Caco-2 (cell line): ENCODE measurements at regions of chr3 and their contacts with region 1.

Region 1: GRCh38 chr3:178436773-178437172 is 99.5 kb upstream of the KCNMB2 start:
- DNase-seq: no peak
- H3K4me3 ChIP-seq: no peak overlapping the region
- H3K4me3 Mint-ChIP-seq: no peak overlapping the region
- H3K27ac Mint-ChIP-seq: no peak overlapping the region
- H3K4me1 ChIP-seq: no peaks in the 10 kb centered on the region
- H3K4me1 Mint-ChIP-seq: no peaks in the 10 kb centered on the region
- H3K27me3 ChIP-seq: no peaks in the 10 kb centered on the region
- H3K27me3 Mint-ChIP-seq: no peaks in the 10 kb centered on the region
- CTCF ChIP-seq: peak; percentile 45 to 51

Region 2: DNA sequence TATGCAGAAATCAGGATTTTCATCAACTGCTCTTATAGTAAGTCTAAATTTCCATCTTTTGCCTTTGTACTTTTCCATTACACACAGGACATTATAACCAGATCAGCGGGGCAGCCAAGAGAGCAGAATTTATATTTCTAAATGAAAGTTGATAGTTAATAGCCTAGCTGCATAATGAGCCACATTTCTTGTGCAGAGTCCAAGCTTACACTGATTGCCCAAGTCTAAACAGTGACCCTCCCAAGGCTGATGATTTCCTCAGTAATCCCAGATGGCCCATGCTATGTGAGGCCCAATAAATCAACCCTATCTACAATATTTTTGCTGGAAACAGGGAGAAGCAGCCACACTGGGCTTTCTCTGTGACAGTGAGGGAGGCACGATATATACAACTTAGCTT is 376.4 kb before region 1 on chr3:
- CTCF ChIA-PET with region 1: no interaction called
- POLR2A ChIA-PET with region 1: no interaction called
- intact Hi-C with region 1: no loop called
- DNase-seq: no peak
- H3K4me3 ChIP-seq: no peak overlapping the region
- H3K4me3 Mint-ChIP-seq: no peak overlapping the region
- H3K27ac Mint-ChIP-seq: no peak overlapping the region
- H3K4me1 ChIP-seq: 0 out of 2 replicates have a peak, but pooled peaks cover 3% of the 10 kb centered on the region
- H3K4me1 Mint-ChIP-seq: no peaks in the 10 kb centered on the region
- H3K27me3 ChIP-seq: no peaks in the 10 kb centered on the region
- H3K27me3 Mint-ChIP-seq: no peaks in the 10 kb centered on the region
- CTCF ChIP-seq: no peak

Region 3: DNA sequence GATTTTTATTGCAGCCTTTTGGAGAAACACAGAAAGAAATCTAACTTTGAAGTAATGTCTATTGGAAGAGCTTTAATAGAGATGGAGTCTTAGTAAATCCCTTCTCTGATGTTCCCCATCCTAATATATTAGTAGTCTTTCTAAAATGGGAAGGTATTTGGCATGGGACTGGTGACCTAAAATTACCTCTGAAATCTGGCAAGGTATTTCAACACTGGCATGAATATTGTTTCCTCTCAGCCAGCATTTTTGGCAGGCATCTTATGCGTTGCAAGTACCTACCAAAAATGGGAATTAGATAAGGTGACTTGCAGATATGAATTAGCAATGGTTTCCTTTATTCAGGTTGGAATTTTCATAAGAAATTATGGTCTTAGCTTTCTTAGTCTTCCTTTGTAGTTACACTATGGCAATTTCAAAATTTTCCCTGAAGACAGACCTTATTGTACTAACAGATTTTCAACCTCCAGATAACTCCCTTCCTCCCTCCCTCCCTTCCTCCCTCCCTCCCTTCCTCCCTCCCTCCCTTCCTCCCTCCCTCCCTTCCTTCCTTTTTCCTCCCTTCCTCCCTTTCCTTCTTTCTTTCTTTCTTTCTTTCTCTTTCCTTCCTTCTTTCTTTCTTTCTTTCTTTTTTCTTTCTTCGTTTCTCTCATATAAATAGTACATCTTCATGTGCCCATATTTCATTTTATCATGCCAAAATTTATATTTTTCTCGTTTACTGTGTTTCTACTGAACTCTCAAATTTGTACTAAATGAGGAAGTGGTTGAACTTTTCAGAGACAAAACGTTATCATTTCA is 68.8 kb before region 1 on chr3:
- CTCF ChIA-PET with region 1: no interaction called
- POLR2A ChIA-PET with region 1: no interaction called
- intact Hi-C with region 1: no loop called
- DNase-seq: no peak
- H3K4me3 ChIP-seq: no peak overlapping the region
- H3K4me3 Mint-ChIP-seq: no peak overlapping the region
- H3K27ac Mint-ChIP-seq: no peak overlapping the region
- H3K4me1 ChIP-seq: no peaks in the 10 kb centered on the region
- H3K4me1 Mint-ChIP-seq: no peaks in the 10 kb centered on the region
- H3K27me3 ChIP-seq: no peaks in the 10 kb centered on the region
- H3K27me3 Mint-ChIP-seq: no peaks in the 10 kb centered on the region
- CTCF ChIP-seq: no peak

Region 4: DNA sequence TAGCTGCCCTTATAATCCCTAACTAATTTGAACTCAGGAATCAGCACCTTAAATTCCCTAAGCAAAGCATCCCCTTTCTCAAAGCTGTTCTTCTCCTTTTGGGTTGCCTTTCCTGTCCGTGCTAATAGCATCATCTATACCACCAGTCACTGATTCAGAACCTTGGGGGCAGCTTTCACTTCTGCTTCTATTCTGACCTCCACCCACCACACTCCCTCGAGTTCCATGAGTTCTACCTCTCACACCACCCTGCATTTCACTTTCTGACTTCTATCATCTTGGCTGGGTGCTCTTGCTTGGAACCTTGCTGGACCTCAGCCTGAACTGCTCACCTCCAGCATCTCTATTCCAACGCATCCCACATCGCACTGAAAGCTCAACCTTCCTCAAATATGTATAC is 44.0 kb after region 1 on chr3:
- CTCF ChIA-PET with region 1: no interaction called
- POLR2A ChIA-PET with region 1: no interaction called
- intact Hi-C with region 1: no loop called
- DNase-seq: no peak
- H3K4me3 ChIP-seq: no peak overlapping the region
- H3K4me3 Mint-ChIP-seq: no peak overlapping the region
- H3K27ac Mint-ChIP-seq: no peak overlapping the region
- H3K4me1 ChIP-seq: peaks cover 8% of the 10 kb centered on the region; the same call in 1 of the 2 replicates
- H3K4me1 Mint-ChIP-seq: no peaks in the 10 kb centered on the region
- H3K27me3 ChIP-seq: no peaks in the 10 kb centered on the region
- H3K27me3 Mint-ChIP-seq: no peaks in the 10 kb centered on the region
- CTCF ChIP-seq: no peak

Region 5: DNA sequence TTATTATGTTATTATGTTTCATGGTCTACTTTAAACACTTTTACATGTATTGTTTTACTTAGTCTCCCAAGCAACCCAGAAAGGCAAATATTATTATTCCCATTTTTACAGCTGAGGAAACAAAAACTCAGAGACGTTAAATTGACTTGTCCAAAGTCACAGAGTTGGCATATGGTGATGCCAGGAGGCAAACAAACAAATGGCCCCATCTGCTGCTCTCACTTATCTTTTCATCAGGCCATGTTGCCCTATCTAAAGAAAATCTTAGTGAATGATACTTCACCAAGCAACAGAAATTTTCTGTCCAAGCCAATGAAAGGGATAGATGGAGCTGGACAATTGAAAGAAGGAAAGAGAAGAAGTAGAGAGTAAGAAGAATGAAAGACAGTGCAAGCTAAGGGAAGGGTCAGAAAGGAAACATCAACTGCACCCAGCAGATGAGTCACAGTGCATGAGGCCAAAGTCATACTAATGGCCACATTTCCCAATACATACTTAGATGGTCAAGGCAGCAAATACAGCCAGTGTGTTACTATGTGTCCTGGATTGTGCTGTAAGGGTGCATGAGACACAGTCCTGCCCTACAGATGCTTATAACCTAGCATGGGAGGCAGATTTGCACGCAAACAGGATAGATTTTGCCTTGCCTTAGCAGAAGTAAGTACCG is 366.4 kb after region 1 on chr3:
- CTCF ChIA-PET with region 1: no interaction called
- POLR2A ChIA-PET with region 1: no interaction called
- intact Hi-C with region 1: loop called (anchors 5 kb)
- DNase-seq: no peak
- H3K4me3 ChIP-seq: no peak overlapping the region
- H3K4me3 Mint-ChIP-seq: no peak overlapping the region
- H3K27ac Mint-ChIP-seq: no peak overlapping the region
- H3K4me1 ChIP-seq: peaks cover 25% of the 10 kb centered on the region
- H3K4me1 Mint-ChIP-seq: peaks cover 22% of the 10 kb centered on the region
- H3K27me3 ChIP-seq: no peaks in the 10 kb centered on the region
- H3K27me3 Mint-ChIP-seq: no peaks in the 10 kb centered on the region
- CTCF ChIP-seq: no peak

Region 6: GRCh38 chr3:178947738-178948137 is 511.0 kb after region 1 on chr3:
- CTCF ChIA-PET with region 1: no interaction called
- POLR2A ChIA-PET with region 1: no interaction called
- intact Hi-C with region 1: loop called (anchors 1 kb)
- DNase-seq: no peak
- H3K4me3 ChIP-seq: no peak overlapping the region
- H3K4me3 Mint-ChIP-seq: no peak overlapping the region
- H3K27ac Mint-ChIP-seq: no peak overlapping the region
- H3K4me1 ChIP-seq: no peaks in the 10 kb centered on the region
- H3K4me1 Mint-ChIP-seq: no peaks in the 10 kb centered on the region
- H3K27me3 ChIP-seq: no peaks in the 10 kb centered on the region
- H3K27me3 Mint-ChIP-seq: no peaks in the 10 kb centered on the region
- CTCF ChIP-seq: no peak

Region 7: GRCh38 chr3:178966299-178967176 is 529.8 kb after region 1 on chr3:
- CTCF ChIA-PET with region 1: interaction called, 11 read pairs
- POLR2A ChIA-PET with region 1: no interaction called
- intact Hi-C with region 1: loop called (anchors 1 kb)
- DNase-seq: no peak
- H3K4me3 ChIP-seq: no peak overlapping the region
- H3K4me3 Mint-ChIP-seq: no peak overlapping the region
- H3K27ac Mint-ChIP-seq: no peak overlapping the region
- H3K4me1 ChIP-seq: no peaks in the 10 kb centered on the region; the same call in none of the 2 replicates
- H3K4me1 Mint-ChIP-seq: no peaks in the 10 kb centered on the region
- H3K27me3 ChIP-seq: no peaks in the 10 kb centered on the region
- H3K27me3 Mint-ChIP-seq: no peaks in the 10 kb centered on the region
- CTCF ChIP-seq: peak; percentile 41 to 61